ENCODE measurements at regions of chr6 and their contacts with region 1.

Region 1: DNA sequence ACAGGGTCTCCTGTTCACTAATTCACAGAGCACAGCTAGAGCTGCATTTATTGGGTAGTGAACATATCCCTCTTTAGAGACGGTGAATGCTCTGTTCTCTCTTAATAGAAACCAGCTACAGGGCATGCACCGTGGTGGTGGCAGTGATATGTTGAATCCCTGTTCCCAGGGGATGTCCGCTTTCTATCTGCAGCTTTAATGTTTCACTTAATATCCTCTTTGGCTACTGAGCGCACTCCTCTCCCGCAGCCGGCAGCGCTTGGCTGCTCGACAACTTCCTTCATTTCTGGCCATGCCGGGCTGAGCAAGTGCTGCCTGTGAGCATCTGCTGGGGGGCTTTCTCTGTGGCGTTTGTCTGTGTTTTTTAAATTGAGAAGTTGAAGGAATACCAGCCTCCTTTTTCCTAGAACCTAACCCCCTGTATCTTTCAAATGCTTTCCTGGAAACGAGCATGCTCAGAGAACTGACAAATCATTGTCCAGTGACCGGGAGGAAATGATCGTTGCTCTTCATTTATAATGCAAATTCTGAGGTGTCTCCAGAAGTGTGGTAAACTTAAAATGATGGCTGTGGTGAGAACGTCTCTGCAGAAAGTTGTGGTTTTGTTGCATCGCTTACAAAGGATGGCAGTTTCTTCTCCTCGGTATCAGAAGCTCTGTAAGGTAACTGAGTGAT is 297.9 kb downstream of the UTRN start:
- DNase-seq: peak; percentile 66
- ATAC-seq: peak; percentile 75
- H3K4me3 ChIP-seq: peak overlapping the region in 4 of 5 experiments; percentile 13 to 56 (median 24)
- H3K4me3 Mint-ChIP-seq: peak overlapping the region; percentile 85
- H3K27ac ChIP-seq: peak overlapping the region in 1 of 2 donors; percentile 52
- H3K27ac Mint-ChIP-seq: peak overlapping the region; percentile 12
- H3K4me1 ChIP-seq: peaks cover 18 to 20% of the 10 kb centered on the region in 2 donors
- H3K4me1 Mint-ChIP-seq: peaks cover 23% of the 10 kb centered on the region
- H3K27me3 ChIP-seq: no peaks in the 10 kb centered on the region
- H3K27me3 Mint-ChIP-seq: no peaks in the 10 kb centered on the region
- CTCF ChIP-seq: no peak

Region 2: DNA sequence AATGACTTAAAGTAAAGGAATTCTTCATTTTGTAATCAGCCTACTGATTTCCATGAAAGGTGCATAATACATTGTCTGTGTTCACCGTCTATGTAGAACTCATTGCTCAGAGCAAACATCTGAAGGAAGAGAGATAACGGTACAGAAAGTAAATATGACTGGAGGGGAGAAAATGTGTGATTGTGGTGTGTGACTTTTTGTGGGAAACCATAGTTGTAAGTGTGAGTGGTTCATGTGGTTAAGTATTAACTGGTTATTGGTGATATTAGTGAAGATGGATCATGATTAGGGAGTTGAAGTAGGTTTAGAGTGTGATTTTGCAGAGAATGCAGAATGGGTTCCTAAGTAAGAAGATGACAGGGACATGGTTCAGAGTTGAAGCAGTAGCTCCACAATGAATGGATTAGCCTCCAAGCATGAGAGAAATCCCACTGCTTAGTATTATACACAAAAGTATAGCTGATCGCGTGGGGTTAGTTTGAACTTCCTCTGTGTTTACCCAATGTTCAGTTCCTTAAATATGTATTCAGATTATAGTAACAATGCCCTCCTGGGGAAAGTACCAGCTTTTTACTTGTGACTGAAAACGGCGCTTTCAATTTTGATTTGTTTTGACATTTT is 70.9 kb after region 1 on chr6:
- CTCF ChIA-PET with region 1: interaction called, 7 read pairs
- POLR2A ChIA-PET with region 1: no interaction called
- intact Hi-C with region 1: loop called (anchors 5 kb)
- DNase-seq: peak; percentile 71
- ATAC-seq: peak; percentile 92
- H3K4me3 ChIP-seq: peak overlapping the region in 3 of 5 experiments; percentile 5 to 66 (median 41)
- H3K4me3 Mint-ChIP-seq: peak overlapping the region; percentile 77
- H3K27ac ChIP-seq: peak overlapping the region; percentile 66 to 83
- H3K27ac Mint-ChIP-seq: peak overlapping the region; percentile 84
- H3K4me1 ChIP-seq: peaks cover 27 to 38% of the 10 kb centered on the region in 2 donors
- H3K4me1 Mint-ChIP-seq: peaks cover 59% of the 10 kb centered on the region
- H3K27me3 ChIP-seq: no peaks in the 10 kb centered on the region
- H3K27me3 Mint-ChIP-seq: no peaks in the 10 kb centered on the region
- CTCF ChIP-seq: no peak

Region 3: GRCh38 chr6:144778773-144779492 is 195.9 kb after region 1 on chr6:
- CTCF ChIA-PET with region 1: interaction called, 24 read pairs
- POLR2A ChIA-PET with region 1: no interaction called
- intact Hi-C with region 1: loop called (anchors 2 kb)
- DNase-seq: peak; percentile 6
- ATAC-seq: no peak
- H3K4me3 ChIP-seq: no peak overlapping the region
- H3K4me3 Mint-ChIP-seq: no peak overlapping the region
- H3K27ac ChIP-seq: no peak overlapping the region
- H3K27ac Mint-ChIP-seq: no peak overlapping the region
- H3K4me1 ChIP-seq: no peaks in the 10 kb centered on the region
- H3K4me1 Mint-ChIP-seq: no peaks in the 10 kb centered on the region
- H3K27me3 ChIP-seq: no peaks in the 10 kb centered on the region
- H3K27me3 Mint-ChIP-seq: no peaks in the 10 kb centered on the region
- CTCF ChIP-seq: no peak

Region 4: DNA sequence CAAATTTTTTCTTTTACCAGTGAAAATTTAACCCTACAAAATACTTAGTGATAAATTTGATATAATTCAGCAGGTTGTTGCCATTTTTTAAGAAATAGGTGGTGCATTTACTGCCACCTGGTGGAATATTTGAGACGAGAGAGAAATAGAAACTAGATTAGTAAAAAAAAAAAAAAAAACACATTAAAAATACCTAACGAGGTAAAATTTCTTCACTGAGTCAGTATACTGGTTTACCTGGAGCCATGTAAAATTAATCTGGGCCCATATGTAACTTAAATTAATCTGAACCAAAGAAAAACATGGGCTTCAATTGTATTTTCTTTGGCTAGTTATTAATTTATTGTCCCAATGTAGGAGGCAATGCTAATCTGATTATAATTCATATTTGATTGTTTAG is 631.5 kb after region 1 on chr6:
- CTCF ChIA-PET with region 1: no interaction called
- POLR2A ChIA-PET with region 1: no interaction called
- intact Hi-C with region 1: loop called (anchors 1 kb)
- DNase-seq: peak; percentile 16
- ATAC-seq: no peak
- H3K4me3 ChIP-seq: no peak overlapping the region
- H3K4me3 Mint-ChIP-seq: no peak overlapping the region
- H3K27ac ChIP-seq: no peak overlapping the region
- H3K27ac Mint-ChIP-seq: no peak overlapping the region
- H3K4me1 ChIP-seq: no peaks in the 10 kb centered on the region
- H3K4me1 Mint-ChIP-seq: peaks cover 6% of the 10 kb centered on the region
- H3K27me3 ChIP-seq: no peaks in the 10 kb centered on the region
- H3K27me3 Mint-ChIP-seq: peaks cover 4% of the 10 kb centered on the region
- CTCF ChIP-seq: peak; percentile 68

Region 5: DNA sequence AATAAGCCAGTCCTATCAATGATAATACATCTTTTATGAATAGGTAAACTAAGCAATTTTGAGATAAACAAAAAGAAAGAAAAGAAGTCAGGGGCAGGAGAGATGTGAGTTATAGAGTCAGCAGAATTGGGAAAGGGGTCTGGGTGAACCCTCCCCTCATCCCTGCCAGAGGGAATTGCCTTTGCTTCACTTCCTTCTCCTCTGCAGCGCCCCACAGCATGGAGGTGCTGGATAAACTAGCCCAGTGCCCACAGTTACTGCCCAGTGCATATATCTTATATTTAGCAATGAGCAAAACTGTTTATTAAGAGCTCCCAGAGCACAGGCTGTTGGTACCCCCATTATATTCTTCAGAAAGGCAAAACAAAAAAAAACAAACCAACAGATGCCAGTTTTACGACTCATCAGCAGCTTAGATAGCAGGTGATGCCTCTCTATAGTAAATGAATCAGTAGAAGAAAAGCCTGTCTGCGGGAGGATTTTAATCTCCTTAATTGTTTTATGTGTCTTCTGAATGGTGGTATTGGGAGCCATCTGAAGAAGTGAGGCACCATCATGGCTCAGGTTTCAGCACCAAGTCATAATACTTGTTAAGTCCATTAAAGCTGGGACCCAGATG is 733.0 kb after region 1 on chr6:
- CTCF ChIA-PET with region 1: no interaction called
- POLR2A ChIA-PET with region 1: no interaction called
- intact Hi-C with region 1: no loop called
- DNase-seq: no peak
- ATAC-seq: no peak
- H3K4me3 ChIP-seq: no peak overlapping the region
- H3K4me3 Mint-ChIP-seq: no peak overlapping the region
- H3K27ac ChIP-seq: no peak overlapping the region
- H3K27ac Mint-ChIP-seq: no peak overlapping the region
- H3K4me1 ChIP-seq: no peaks in the 10 kb centered on the region
- H3K4me1 Mint-ChIP-seq: no peaks in the 10 kb centered on the region
- H3K27me3 ChIP-seq: no peaks in the 10 kb centered on the region
- H3K27me3 Mint-ChIP-seq: no peaks in the 10 kb centered on the region
- CTCF ChIP-seq: no peak

Region 6: DNA sequence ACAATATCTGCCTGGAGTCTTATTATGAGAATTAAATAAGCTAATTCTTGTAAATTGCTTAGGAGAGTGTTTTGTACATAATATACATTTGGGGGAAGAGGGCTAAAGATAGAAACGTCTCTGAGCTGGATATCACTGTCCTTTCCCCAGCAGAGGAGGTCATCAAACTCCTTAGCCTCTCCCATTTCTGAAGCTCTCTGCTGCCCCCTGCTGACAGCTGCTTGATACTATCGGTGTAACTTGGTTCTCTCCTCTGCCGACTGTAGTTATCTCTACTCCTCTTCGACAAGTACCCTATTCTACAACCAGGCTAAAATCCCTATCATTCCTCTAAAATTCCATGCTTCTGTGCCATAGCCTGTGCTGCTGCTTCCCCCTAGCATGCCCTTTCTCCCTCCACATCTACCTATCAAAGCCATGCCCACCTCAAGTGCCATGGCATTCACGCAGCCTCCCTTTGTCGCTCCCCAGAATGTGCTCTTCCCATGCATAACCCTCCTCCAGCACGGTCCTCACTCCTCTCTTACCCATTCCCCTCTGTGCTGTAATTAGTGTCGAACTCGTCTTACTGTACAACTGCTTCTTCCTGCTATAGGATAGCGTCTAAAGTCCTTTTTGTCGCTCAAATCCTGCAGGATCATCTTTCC is 1051.0 kb after region 1 on chr6:
- CTCF ChIA-PET with region 1: interaction called, 4 read pairs
- POLR2A ChIA-PET with region 1: no interaction called
- intact Hi-C with region 1: loop called (anchors 2 kb)
- DNase-seq: peak; percentile 73
- ATAC-seq: peak; percentile 69
- H3K4me3 ChIP-seq: no peak overlapping the region
- H3K4me3 Mint-ChIP-seq: no peak overlapping the region
- H3K27ac ChIP-seq: no peak overlapping the region
- H3K27ac Mint-ChIP-seq: no peak overlapping the region
- H3K4me1 ChIP-seq: peaks cover 0 to 3% of the 10 kb centered on the region in 2 donors
- H3K4me1 Mint-ChIP-seq: peaks cover 8% of the 10 kb centered on the region
- H3K27me3 ChIP-seq: no peaks in the 10 kb centered on the region
- H3K27me3 Mint-ChIP-seq: no peaks in the 10 kb centered on the region
- CTCF ChIP-seq: peak; percentile 98

Region 7: DNA sequence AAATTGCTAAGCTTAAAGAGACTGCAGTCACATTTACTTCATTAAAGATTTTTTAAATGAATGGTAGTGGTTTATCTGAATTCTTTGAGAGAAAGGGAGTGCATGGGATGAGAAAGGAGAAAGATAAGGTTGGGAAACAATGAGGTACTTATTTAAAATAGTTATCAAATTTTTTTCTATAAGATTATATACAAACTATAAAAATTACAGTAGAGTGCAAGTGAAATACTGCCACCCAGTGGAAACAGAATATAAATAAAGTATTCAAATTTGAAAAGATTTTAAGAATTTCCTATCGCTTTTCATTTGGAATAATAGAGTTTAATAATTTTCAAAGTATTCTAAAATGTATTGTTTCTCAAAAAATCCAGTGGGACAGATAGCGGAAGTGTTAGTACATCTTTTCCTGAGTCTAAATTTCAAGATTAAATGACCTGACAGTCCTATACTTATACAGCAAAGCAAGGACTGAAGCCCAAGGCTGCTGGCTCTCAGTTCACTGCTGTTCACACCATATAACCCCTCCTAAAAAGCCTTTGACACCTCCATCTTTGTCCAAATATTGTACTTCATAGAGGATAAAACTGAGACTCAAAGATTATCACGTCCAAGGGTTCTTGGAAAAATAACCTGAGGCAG is 1121.2 kb after region 1 on chr6:
- CTCF ChIA-PET with region 1: no interaction called
- POLR2A ChIA-PET with region 1: no interaction called
- intact Hi-C with region 1: loop called (anchors 10 kb)
- DNase-seq: no peak
- ATAC-seq: no peak
- H3K4me3 ChIP-seq: no peak overlapping the region
- H3K4me3 Mint-ChIP-seq: no peak overlapping the region
- H3K27ac ChIP-seq: no peak overlapping the region
- H3K27ac Mint-ChIP-seq: no peak overlapping the region
- H3K4me1 ChIP-seq: peaks cover 2 to 4% of the 10 kb centered on the region in 2 donors
- H3K4me1 Mint-ChIP-seq: peaks cover 6% of the 10 kb centered on the region
- H3K27me3 ChIP-seq: no peaks in the 10 kb centered on the region
- H3K27me3 Mint-ChIP-seq: no peaks in the 10 kb centered on the region
- CTCF ChIP-seq: peak; percentile 80